ENCODE measurements at regions of chr12 and their contacts with region 1.

Region 1: GRCh38 chr12:53757095-53757770 is 5.5 kb upstream of the CISTR start:
- DNase-seq: peak; percentile 97
- ATAC-seq: peak; percentile 68
- H3K4me3 Mint-ChIP-seq: peak overlapping the region; percentile 65
- H3K27ac Mint-ChIP-seq: no peak overlapping the region
- H3K4me1 Mint-ChIP-seq: peaks cover 2% of the 10 kb centered on the region
- H3K27me3 Mint-ChIP-seq: peaks cover 9% of the 10 kb centered on the region; the same call in 1 of the 2 replicates
- CTCF ChIP-seq: peak; percentile 95

Region 2: DNA sequence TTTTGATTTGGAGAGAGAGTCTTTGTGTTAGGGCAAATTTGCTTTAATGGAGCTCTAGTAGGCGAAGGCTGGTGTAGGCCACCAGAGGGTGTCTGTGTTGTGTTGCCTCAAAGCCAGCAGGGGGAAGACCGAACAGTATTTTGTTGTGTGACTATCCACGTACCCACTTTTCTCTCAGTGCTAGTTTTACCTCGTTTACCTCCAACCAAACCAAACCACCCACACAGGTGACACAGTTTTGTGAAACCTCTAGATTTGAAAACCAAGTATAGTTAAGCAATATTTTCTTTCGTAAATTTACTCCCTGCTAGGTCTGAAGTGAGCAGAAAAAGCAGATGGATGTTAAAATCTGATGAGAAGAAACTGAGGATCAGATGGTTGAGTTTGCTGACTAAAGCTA is 213.7 kb before region 1 on chr12:
- CTCF ChIA-PET with region 1: interaction called, 10 read pairs
- POLR2A ChIA-PET with region 1: no interaction called
- DNase-seq: peak; percentile 46
- ATAC-seq: peak; percentile 96
- H3K4me3 Mint-ChIP-seq: no peak overlapping the region
- H3K27ac Mint-ChIP-seq: peak overlapping the region; percentile 46
- H3K4me1 Mint-ChIP-seq: peaks cover 8% of the 10 kb centered on the region
- H3K27me3 Mint-ChIP-seq: no peaks in the 10 kb centered on the region
- CTCF ChIP-seq: peak; percentile 22; the same call in 1 of the 2 replicates

Region 3: DNA sequence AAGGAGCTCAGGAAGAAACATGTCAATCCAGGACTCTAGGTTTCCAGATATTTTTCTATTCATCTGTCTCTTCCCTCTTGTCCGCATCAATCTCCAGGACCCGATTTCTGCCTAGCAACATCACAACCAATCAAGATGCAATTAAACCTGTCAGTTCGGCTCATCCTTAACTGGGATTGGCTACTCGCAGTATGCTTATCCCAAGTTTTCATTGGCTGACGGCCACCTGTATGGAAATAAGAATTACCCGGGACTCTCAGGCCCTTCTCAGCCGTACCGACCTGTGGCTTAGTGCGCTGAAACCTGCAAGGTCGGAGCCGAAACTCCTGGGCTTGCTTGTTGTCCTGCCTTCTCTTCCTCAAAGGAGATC is 61.0 kb before region 1 on chr12:
- CTCF ChIA-PET with region 1: interaction called, 36 read pairs
- POLR2A ChIA-PET with region 1: no interaction called
- DNase-seq: peak; percentile 74
- ATAC-seq: peak; percentile 94
- H3K4me3 Mint-ChIP-seq: peak overlapping the region; percentile 78
- H3K27ac Mint-ChIP-seq: peak overlapping the region; percentile 100
- H3K4me1 Mint-ChIP-seq: peaks cover 35% of the 10 kb centered on the region
- H3K27me3 Mint-ChIP-seq: peaks cover 59% of the 10 kb centered on the region
- CTCF ChIP-seq: no peak

Region 4: DNA sequence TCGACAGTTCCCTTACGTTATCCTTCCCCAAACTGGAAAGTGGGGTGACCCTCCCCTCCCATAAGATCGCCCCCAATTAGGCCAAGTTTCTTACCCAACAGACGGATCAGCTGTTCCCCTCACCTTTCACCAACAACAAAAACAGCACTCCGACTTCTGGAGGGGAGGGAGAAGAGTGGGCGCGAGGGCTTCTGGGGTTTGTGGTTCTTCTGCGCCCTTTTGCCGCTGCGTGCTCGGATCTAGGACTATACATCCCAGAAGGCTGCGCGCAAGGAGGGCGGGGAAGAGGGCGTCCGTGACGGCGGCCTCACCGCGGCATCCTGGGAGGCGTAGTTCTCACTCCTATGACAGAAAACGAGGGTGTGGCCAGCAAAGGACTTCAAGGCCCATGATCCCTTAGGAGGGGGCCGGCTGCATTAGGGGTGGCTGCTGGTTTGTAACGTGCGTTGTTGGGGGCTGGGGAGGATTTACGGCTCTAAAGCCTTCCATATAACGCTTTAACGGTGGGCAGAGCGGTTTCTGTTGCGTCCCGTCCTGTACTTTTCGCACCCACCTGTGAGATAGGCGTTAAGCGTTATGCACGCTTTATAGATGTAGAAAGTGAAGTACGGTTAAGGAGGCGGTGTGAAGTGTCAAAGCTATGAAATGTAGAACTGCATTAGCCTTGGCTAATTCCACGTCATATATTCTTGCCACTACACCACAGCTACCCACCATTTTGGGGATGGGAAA is 29.8 kb before region 1 on chr12 and contains the start of gene CALCOCO1:
- CTCF ChIA-PET with region 1: interaction called, 12 read pairs
- POLR2A ChIA-PET with region 1: no interaction called
- DNase-seq: peak; percentile 98
- ATAC-seq: peak; percentile 98
- H3K4me3 Mint-ChIP-seq: peak within 1 kb of the TSS; percentile 94
- H3K27ac Mint-ChIP-seq: peak within 1 kb of the TSS; percentile 88
- H3K4me1 Mint-ChIP-seq: peaks cover 27% of the 10 kb centered on the region
- H3K27me3 Mint-ChIP-seq: peaks cover 3% of the 10 kb centered on the region; the same call in 1 of the 2 replicates
- CTCF ChIP-seq: no peak
- total RNA-seq, gene CALCOCO1: 21.2 to 28.2 TPM (median 27.0 TPM) in 3 replicates

Region 5: DNA sequence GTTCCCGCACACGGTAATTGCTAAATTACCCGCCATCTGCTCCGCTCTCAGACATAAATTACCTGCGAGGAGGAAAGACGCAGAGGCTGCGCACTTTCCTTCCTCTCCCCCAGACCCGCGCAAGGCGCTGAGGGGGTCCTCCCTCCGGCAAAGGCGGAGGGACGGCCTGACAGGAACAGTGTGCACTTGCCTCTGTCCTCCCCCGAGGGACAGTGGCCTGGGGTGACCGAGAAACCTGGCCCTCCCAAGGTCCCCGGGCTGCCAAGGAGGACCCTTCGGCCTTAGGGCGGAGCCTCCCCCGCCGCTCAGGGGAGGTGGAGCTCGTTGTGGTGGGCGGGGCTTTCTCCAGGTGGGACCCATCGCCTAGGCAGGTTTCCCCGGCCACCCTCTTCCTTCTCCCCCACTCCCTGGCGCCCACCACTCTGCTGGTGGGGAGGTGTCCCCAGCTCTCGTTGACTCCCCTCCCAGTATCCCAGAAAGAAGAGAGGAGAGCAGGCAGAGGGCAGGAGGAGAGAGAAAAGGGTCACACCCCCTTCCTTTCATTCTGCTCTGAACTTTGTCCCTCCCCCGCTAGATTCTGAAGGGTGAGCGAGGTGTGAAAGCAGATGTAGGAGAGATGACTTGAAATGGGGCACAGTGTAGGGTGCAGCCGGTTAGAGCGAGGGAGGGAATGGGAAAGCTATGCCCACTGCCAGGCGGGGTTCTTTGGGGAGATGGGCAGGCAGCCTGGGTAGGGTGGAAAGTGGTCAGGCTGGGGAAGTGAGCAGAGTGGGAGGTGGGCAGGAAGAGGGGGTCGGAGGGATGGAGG is 18.6 kb before region 1 on chr12:
- CTCF ChIA-PET with region 1: interaction called, 224 read pairs
- POLR2A ChIA-PET with region 1: no interaction called
- DNase-seq: peak; percentile 85
- ATAC-seq: peak; percentile 88
- H3K4me3 Mint-ChIP-seq: no peak overlapping the region
- H3K27ac Mint-ChIP-seq: no peak overlapping the region
- H3K4me1 Mint-ChIP-seq: peaks cover 29% of the 10 kb centered on the region
- H3K27me3 Mint-ChIP-seq: peaks cover 8% of the 10 kb centered on the region
- CTCF ChIP-seq: no peak

Region 6: GRCh38 chr12:53781228-53781801 is 24.1 kb after region 1 on chr12:
- CTCF ChIA-PET with region 1: interaction called, 12 read pairs
- POLR2A ChIA-PET with region 1: no interaction called
- DNase-seq: no peak
- ATAC-seq: peak; percentile 77
- H3K4me3 Mint-ChIP-seq: no peak overlapping the region
- H3K27ac Mint-ChIP-seq: no peak overlapping the region
- H3K4me1 Mint-ChIP-seq: peaks cover 19% of the 10 kb centered on the region
- H3K27me3 Mint-ChIP-seq: no peaks in the 10 kb centered on the region; the same call in 1 of the 2 replicates
- CTCF ChIP-seq: no peak

Region 7: GRCh38 chr12:53952871-53953734 is 195.9 kb after region 1 on chr12:
- CTCF ChIA-PET with region 1: interaction called, 26 read pairs
- POLR2A ChIA-PET with region 1: interaction called, 3 read pairs
- DNase-seq: peak; percentile 81
- ATAC-seq: peak; percentile 21
- H3K4me3 Mint-ChIP-seq: peak overlapping the region; percentile 23
- H3K27ac Mint-ChIP-seq: no peak overlapping the region
- H3K4me1 Mint-ChIP-seq: peaks cover 28% of the 10 kb centered on the region
- H3K27me3 Mint-ChIP-seq: peaks cover 100% of the 10 kb centered on the region
- CTCF ChIP-seq: no peak

Measured in WTC11 (cell line).